Right ventricle myocardium superior (tissue), 1 donor: ENCODE measurements at regions of chr3 and their contacts with region 1.

Region 1: GRCh38 chr3:109081746-109082510 is 36.0 kb downstream of the MORC1 start:
- DNase-seq: no peak
- ATAC-seq: peak; percentile 61

Region 2: DNA sequence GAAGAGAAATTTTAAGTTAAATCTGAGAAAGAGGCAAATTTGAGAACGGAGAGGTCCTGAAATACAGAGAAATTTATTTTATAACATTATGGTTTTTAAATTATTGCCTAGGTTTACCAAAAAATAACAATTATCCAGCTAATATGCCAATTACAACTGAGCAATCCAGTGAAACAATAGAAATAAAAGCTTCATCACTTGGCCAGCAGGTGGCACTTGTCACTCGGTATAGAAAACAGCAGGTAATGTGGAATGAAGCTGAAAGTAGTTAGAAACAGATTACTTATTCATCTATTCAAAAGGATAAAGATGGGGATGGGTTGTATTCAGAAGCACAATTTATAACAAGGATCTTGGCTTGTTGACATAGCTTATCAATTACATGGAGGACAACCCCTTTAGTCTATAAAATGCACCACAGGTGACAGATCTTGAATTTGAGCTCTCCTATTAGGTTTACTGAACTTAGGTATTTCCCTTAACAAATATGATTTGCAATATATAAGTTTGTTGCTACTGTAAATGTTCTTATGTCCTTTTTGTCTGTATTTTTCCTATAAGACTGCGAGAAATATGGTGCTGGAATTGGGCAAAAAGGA is 58.2 kb before region 1 on chr3:
- intact Hi-C with region 1: loop called (anchors 10 kb)
- DNase-seq: no peak
- ATAC-seq: no peak